Calu3 (cell line): ENCODE measurements at regions of chr16 and their contacts with region 1.

Region 1: GRCh38 chr16:17467923-17468540 is 2.7 kb downstream of the XYLT1 start:
- DNase-seq: peak; percentile 74
- H3K4me3 Mint-ChIP-seq: no peak overlapping the region
- H3K27ac Mint-ChIP-seq: no peak overlapping the region
- H3K4me1 Mint-ChIP-seq: peaks cover 20% of the 10 kb centered on the region
- H3K27me3 Mint-ChIP-seq: peaks cover 31% of the 10 kb centered on the region
- CTCF ChIP-seq: peak; percentile 69

Region 2: GRCh38 chr16:16861546-16861945 is 606.5 kb before region 1 on chr16:
- CTCF ChIA-PET with region 1: interaction called, 6 read pairs
- intact Hi-C with region 1: loop called (anchors 1 kb)
- DNase-seq: peak; percentile 59
- H3K4me3 Mint-ChIP-seq: no peak overlapping the region
- H3K27ac Mint-ChIP-seq: no peak overlapping the region
- H3K4me1 Mint-ChIP-seq: no peaks in the 10 kb centered on the region
- H3K27me3 Mint-ChIP-seq: peaks cover 13% of the 10 kb centered on the region
- CTCF ChIP-seq: peak; percentile 62

Region 3: GRCh38 chr16:17205279-17206211 is 262.5 kb before region 1 on chr16:
- CTCF ChIA-PET with region 1: interaction called, 3 read pairs
- intact Hi-C with region 1: loop called (anchors 1 kb)
- DNase-seq: peak; percentile 34
- H3K4me3 Mint-ChIP-seq: no peak overlapping the region
- H3K27ac Mint-ChIP-seq: no peak overlapping the region
- H3K4me1 Mint-ChIP-seq: peaks cover 13% of the 10 kb centered on the region
- H3K27me3 Mint-ChIP-seq: peaks cover 15% of the 10 kb centered on the region
- CTCF ChIP-seq: no peak

Region 4: GRCh38 chr16:17224879-17225281 is 243.2 kb before region 1 on chr16:
- CTCF ChIA-PET with region 1: interaction called, 14 read pairs
- intact Hi-C with region 1: loop called (anchors 5 kb)
- DNase-seq: no peak
- H3K4me3 Mint-ChIP-seq: no peak overlapping the region
- H3K27ac Mint-ChIP-seq: peak overlapping the region; percentile 1
- H3K4me1 Mint-ChIP-seq: peaks cover 27% of the 10 kb centered on the region
- H3K27me3 Mint-ChIP-seq: no peaks in the 10 kb centered on the region
- CTCF ChIP-seq: no peak

Region 5: DNA sequence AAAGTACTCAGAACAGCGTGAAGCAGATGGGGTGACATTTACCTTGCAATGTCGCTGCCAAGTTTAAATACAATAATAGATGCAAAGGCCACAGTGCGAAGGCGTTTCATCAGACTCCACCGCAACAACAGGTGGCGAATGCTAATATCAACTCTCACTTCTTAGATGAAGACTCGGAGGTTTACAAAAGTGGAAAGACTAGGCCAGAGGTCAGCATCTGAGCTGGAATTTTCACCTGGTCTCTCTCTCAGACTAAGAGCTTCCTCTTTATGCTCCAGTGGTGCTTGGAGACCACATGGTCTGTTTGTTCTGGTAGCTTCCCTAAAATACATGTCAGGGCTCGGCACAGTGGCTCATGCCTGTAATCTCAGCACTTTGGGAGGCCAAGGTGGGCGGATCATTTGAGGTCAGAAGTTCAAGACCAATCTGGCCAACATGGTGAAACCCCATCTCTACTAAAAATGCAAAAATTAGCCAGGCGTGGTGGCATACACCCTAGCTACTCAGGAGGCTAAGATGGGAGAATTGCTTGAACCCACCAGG is 166.4 kb before region 1 on chr16:
- CTCF ChIA-PET with region 1: no interaction called
- intact Hi-C with region 1: loop called (anchors 2 kb)
- DNase-seq: no peak
- H3K4me3 Mint-ChIP-seq: no peak overlapping the region
- H3K27ac Mint-ChIP-seq: no peak overlapping the region
- H3K4me1 Mint-ChIP-seq: peaks cover 51% of the 10 kb centered on the region
- H3K27me3 Mint-ChIP-seq: no peaks in the 10 kb centered on the region
- CTCF ChIP-seq: no peak

Region 6: DNA sequence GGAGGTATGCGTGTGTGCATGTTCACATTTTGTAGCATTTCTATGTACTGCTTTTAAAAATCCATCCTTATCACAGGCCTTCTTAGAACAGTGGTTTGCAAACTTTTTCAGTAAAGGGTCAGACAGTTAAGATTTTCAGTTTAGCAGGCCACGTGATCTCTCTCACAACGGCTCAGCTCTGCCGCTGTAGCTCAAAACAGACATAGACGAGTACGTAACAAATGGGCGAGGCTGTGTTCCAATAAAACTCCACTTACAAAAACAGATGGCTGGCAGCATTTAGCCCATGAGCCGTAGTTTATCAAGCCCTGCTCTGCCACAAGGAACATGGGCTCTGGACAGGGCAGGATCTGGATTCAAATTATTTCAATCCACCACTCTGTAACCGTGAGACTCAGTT is 139.1 kb before region 1 on chr16:
- CTCF ChIA-PET with region 1: no interaction called
- intact Hi-C with region 1: no loop called
- DNase-seq: no peak
- H3K4me3 Mint-ChIP-seq: no peak overlapping the region
- H3K27ac Mint-ChIP-seq: no peak overlapping the region
- H3K4me1 Mint-ChIP-seq: no peaks in the 10 kb centered on the region
- H3K27me3 Mint-ChIP-seq: no peaks in the 10 kb centered on the region
- CTCF ChIP-seq: no peak

Region 7: DNA sequence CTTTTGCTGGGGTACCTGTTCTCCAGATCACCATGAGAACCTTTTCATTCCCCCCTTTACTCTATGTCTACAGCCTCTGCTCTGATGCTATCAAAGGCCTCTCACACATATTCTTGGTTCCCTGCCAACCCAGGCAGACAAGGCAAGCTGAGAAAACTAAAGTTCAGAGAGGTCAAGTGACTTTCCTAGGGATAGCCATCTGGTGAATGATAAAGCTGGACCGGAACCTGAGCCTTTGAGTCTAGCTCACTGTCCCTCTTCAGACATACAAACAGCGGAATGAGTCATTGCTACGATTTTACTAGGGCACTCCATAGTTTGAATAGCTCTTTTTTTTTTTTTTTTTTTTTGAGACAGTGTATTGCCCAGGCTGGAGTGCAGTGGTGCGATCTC is 70.5 kb before region 1 on chr16:
- CTCF ChIA-PET with region 1: interaction called, 3 read pairs
- intact Hi-C with region 1: loop called (anchors 2 kb)
- DNase-seq: peak; percentile 35
- H3K4me3 Mint-ChIP-seq: no peak overlapping the region
- H3K27ac Mint-ChIP-seq: peak overlapping the region; percentile 69
- H3K4me1 Mint-ChIP-seq: peaks cover 27% of the 10 kb centered on the region
- H3K27me3 Mint-ChIP-seq: no peaks in the 10 kb centered on the region
- CTCF ChIP-seq: no peak

Region 8: GRCh38 chr16:17423221-17423620 is 44.8 kb before region 1 on chr16:
- CTCF ChIA-PET with region 1: no interaction called
- intact Hi-C with region 1: no loop called
- DNase-seq: no peak
- H3K4me3 Mint-ChIP-seq: no peak overlapping the region
- H3K27ac Mint-ChIP-seq: no peak overlapping the region
- H3K4me1 Mint-ChIP-seq: no peaks in the 10 kb centered on the region
- H3K27me3 Mint-ChIP-seq: no peaks in the 10 kb centered on the region
- CTCF ChIP-seq: no peak